ENCODE measurements at regions of chr11 and their contacts with region 1.

Region 1: GRCh38 chr11:103682318-103683184 is 353.9 kb upstream of the DDI1 start:
- DNase-seq: peak; percentile 55
- ATAC-seq: peak; percentile 96

Region 2: GRCh38 chr11:103619480-103619879 is 63.1 kb before region 1 on chr11:
- intact Hi-C with region 1: no loop called
- DNase-seq: no peak
- ATAC-seq: no peak

Region 3: DNA sequence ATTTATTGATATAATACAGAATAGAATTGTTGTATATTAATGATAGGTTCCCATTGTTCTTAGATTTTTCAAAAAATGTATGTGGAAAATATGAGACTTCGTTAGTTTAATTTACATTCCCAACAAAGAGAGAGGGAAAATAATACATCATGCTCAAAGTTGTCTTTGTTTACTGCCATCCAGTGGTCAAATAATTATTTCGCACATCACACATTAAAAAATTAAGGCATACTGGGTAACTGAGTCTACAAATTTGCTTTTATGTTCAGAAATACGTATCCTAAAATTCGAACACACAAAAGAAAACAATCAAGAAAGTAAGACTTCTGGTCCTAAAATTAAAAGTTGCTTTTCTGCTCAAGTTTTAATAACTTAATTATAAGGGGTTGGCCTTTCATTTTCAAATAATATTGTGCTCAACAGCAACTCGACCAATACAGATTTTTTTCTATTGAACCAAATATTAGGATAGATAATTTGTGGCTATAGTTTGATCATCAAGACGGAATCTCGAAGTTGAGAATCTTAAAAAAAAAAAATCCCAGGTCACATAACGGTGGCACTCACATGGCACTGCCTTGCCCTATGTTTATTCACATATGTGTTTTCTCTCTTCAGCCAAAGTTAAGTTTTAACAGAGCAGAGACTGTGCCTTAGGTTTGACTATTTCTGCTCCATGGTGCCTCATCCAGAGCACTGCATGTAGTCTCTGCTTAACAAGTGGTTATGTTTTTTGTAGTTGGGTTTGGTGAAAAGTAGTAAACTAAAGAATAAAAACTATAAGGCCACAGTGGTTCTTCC is 469.1 kb after region 1 on chr11:
- intact Hi-C with region 1: loop called (anchors 2 kb)
- DNase-seq: no peak
- ATAC-seq: no peak